ENCODE measurements at regions of chr4 and their contacts with region 1.

Region 1: DNA sequence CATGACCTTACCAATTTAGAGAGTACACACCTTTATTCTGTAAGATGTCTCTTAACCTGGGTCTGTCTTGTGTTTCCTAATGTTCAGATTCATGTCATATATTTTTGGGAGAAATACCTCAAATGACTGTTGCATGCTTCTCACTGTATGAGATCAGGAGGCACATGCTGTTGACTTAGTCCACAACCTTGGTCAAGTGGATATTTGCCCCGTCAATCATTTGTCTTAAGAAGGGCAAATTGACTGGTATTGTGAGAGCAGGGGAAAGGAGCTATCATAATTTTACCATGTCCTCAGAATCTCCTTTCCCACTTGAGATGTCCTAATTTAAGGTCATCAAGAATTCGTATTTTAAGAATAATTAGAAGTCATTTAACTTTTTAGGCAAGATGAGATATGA is 11.0 kb downstream of the NUDT9 start:
- DNase-seq: no peak
- H3K4me3 ChIP-seq: no peak overlapping the region
- H3K27ac ChIP-seq: no peak overlapping the region
- H3K4me1 ChIP-seq: no peaks in the 10 kb centered on the region
- H3K27me3 ChIP-seq: no peaks in the 10 kb centered on the region
- CTCF ChIP-seq: no peak

Region 2: DNA sequence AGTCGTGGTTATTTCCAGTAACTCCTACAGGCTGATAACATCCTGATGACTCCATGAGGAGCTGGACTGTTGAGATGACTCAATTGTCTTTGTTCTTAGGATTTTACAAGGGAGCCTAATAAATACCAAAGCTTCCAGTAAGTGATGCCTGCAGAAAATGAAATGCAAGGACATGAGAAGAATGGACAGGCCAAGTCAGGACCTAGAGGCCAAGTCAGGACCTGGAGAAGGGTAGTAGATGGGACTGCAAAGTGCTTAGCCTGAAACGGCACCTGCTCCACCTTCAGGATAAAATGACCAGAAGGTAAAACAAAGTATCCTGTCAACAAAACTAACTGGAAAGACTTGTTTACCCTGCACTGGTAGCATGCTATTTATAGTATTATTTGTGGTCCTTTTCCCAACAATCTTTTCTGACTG is 577.8 kb before region 1 on chr4:
- CTCF ChIA-PET with region 1: no interaction called
- POLR2A ChIA-PET with region 1: no interaction called
- intact Hi-C with region 1: no loop called
- DNase-seq: peak; percentile 24 to 78
- H3K4me3 ChIP-seq: peak overlapping the region; percentile 13; the same call in 1 of the 2 replicates
- H3K27ac ChIP-seq: peak overlapping the region; percentile 51
- H3K4me1 ChIP-seq: peaks cover 30% of the 10 kb centered on the region
- H3K27me3 ChIP-seq: no peaks in the 10 kb centered on the region
- CTCF ChIP-seq: no peak; the same call in 1 of the 2 replicates

Region 3: DNA sequence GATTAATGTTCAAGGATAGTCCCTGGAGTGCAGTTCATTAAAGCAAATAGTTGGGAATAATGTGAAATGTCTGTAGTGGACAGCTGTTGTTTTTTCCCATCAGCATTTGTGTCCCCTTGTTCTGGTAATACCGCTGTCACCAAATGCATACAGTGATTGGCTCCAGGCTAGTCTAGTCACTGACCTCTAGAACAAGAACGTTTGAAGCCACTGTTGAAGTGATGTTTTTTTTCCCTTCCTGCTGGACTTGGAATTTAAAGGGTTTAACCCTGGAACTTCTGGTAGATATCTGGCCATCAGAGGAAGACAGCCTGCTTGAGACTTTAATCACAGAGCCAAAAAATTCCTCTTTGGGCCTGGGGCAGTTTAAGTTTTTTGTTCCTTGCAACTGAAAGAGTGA is 72.9 kb before region 1 on chr4:
- CTCF ChIA-PET with region 1: interaction called, 10 read pairs
- POLR2A ChIA-PET with region 1: no interaction called
- intact Hi-C with region 1: no loop called
- DNase-seq: no peak
- H3K4me3 ChIP-seq: no peak overlapping the region
- H3K27ac ChIP-seq: no peak overlapping the region
- H3K4me1 ChIP-seq: no peaks in the 10 kb centered on the region
- H3K27me3 ChIP-seq: no peaks in the 10 kb centered on the region
- CTCF ChIP-seq: no peak